Right ventricle myocardium superior (tissue), 1 donor: ENCODE measurements at regions of chr3 and their contacts with region 1.

Region 1: GRCh38 chr3:193572426-193572908 is 17.8 kb upstream of the ATP13A4 start:
- DNase-seq: no peak
- ATAC-seq: peak; percentile 85

Region 2: GRCh38 chr3:192566706-192567290 is 1005.7 kb before region 1 on chr3:
- intact Hi-C with region 1: loop called (anchors 5 kb)
- DNase-seq: peak; percentile 74
- ATAC-seq: peak; percentile 71

Region 3: DNA sequence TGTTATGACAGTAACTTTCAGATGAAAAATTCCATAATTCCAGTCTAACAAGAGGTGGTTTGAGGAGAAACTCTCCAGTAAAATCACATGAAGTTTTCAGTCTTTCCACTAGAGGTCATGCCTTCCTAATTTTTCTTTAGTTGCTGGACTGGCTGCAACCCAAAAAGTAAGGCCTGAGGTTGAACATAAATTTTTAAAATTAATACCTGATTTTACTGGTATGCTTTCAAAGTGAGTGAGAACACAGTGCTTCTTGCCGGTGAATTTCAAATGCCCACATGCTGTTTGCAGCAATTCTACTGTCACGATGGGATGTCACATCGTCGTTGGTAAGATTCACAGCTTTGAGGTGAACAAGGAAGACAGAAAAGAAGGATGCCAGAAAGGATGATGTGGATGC is 756.1 kb before region 1 on chr3:
- intact Hi-C with region 1: loop called (anchors 5 kb)
- DNase-seq: no peak
- ATAC-seq: peak; percentile 49

Region 4: GRCh38 chr3:192947421-192947820 is 625.0 kb before region 1 on chr3:
- intact Hi-C with region 1: no loop called
- DNase-seq: no peak
- ATAC-seq: no peak

Region 5: DNA sequence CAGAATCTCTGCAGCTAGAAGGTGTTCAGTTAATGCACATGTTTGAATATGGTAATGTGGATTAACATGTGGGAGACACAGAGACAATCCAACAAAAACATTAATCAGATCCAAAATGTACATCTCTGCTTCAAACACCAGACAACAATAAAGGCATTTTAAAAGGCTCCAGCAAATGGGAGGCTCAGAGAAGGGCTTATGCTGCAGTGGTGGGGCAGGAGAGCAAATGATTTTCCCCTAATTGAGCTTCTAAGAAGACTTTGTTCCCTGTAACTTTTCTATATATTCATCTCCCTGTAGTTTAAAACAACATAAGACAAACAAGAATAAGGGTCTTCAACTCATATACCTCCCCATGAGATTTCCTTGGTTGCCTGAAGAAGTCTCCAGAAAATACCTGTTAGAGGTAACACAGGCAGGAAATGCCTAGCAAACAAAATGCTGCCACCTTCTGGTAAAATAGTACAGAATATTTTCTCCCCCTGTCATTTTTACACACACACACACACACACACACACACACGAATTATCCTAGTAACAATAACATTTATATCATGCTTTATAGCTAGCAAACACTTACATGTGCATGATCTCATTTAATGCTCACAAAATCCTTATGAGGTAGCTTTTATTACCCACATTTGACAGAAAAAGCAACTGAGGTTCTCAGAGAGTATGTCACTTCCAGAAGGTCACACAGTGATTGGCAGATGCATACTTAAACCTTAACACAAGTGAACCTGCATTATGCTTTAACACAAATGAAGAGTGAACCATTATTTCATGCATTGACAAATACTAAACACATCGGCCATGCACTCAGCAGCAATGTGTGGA is 531.4 kb before region 1 on chr3:
- intact Hi-C with region 1: loop called (anchors 10 kb)
- DNase-seq: no peak
- ATAC-seq: no peak

Region 6: DNA sequence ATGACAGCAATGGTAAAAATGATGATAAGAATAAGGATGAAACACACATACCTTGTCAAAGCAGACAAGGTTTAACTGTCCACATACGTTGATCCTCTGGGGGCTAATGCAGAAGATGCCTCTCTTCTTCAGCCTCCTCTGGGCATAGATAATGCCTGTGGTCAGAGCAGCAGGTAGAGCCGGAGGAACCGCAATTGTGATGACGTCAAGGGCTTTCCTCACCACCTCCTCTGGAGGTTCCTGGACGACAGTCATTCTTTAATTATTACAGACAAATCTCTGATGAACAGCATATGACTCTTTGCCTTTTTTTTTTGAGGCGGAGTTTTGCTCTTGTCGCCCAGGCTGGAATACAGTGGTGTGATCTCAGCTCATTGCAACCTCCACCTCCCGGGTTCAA is 107.6 kb before region 1 on chr3:
- intact Hi-C with region 1: loop called (anchors 5 kb)
- DNase-seq: no peak
- ATAC-seq: no peak

Region 7: GRCh38 chr3:193805509-193805908 is 233.0 kb after region 1 on chr3:
- intact Hi-C with region 1: no loop called
- DNase-seq: peak; percentile 84
- ATAC-seq: peak; percentile 70